HEK293 (cell line): ENCODE measurements at regions of chr16 and their contacts with region 1.

Region 1: DNA sequence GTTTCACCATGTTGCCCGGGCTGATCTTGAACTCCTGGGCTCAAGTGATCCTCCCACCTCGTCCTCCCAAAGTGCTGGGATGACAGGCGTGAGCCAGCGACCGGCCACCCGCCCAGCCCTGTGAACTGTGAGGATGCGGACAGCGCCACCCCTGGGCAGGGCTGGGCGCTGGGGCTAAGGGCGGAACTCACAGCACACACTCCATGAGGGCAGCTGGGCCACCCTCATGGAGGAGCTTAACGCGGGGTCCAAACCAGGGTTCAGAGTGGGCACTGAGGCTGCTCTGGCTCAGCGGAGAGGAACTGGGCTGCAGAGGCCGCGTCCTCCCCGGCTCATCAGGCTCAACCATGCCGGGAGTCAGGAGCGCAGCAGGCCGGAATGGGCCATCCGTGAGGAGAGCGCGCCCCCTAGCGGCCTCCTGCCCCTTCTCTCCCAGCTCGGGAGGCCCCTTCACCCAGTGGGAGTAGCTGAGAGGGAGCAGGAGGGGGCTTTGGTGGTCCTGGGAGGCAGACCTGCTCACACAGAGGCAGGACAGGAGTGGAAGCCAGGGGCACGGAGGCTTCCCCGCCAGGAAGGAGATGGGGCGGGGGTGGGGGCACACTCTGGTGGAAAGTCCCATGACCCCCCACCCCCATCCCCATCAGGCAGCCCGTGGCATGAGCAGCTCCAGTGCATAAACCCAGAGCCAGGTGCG is 13.8 kb downstream of the CORO7 start:
- H3K4me3 ChIP-seq: no peak overlapping the region
- H3K27ac ChIP-seq: no peak overlapping the region
- H3K4me1 ChIP-seq: no peaks in the 10 kb centered on the region
- CTCF ChIP-seq: peak; percentile 98

Region 2: DNA sequence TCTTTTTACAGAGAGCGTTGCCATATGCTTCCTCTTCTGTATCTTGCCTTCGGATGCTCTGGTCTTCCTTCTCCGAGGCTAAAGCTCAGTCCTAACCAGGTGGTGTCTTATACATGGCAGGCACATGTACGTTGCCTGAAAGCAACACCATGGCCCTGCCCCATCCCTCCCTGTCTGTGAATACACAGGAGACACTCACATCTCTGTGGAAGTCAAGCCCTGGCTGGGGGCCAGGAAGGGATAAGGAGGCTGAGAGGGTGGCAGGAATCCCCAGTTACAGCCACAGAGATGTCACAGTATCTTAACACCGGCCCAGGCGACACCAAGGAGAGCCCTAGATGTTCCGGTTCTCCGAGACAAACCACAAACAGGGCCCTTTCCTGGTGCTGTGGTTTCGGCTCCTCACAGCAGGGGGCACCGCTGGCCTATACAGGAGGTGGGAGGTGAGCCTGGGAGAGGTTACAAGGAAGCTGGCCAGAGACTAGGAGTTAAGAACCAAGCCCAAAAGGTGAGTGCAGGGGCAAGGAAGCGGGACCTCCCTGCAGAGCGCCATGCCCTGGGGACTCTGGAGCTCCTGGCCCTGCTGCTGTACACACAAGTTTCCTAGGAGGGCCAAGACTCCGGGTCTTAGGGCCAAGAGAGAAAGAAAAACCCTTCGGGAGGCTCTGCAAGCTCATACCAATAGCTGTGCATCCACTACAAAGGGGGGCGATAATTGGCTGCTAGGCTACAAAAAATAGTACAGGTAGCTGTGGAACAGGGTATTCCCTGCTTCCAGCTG is 202.4 kb before region 1 on chr16:
- CTCF ChIA-PET with region 1: interaction called, 23 read pairs
- POLR2A ChIA-PET with region 1: no interaction called
- H3K4me3 ChIP-seq: no peak overlapping the region
- H3K27ac ChIP-seq: no peak overlapping the region
- H3K4me1 ChIP-seq: no peaks in the 10 kb centered on the region
- CTCF ChIP-seq: peak; percentile 80

Region 3: GRCh38 chr16:4288148-4288921 is 114.3 kb before region 1 on chr16:
- CTCF ChIA-PET with region 1: interaction called, 45 read pairs
- POLR2A ChIA-PET with region 1: no interaction called
- H3K4me3 ChIP-seq: no peak overlapping the region; the same call in 1 of the 2 replicates
- H3K27ac ChIP-seq: no peak overlapping the region
- H3K4me1 ChIP-seq: no peaks in the 10 kb centered on the region
- CTCF ChIP-seq: peak; percentile 92

Region 4: DNA sequence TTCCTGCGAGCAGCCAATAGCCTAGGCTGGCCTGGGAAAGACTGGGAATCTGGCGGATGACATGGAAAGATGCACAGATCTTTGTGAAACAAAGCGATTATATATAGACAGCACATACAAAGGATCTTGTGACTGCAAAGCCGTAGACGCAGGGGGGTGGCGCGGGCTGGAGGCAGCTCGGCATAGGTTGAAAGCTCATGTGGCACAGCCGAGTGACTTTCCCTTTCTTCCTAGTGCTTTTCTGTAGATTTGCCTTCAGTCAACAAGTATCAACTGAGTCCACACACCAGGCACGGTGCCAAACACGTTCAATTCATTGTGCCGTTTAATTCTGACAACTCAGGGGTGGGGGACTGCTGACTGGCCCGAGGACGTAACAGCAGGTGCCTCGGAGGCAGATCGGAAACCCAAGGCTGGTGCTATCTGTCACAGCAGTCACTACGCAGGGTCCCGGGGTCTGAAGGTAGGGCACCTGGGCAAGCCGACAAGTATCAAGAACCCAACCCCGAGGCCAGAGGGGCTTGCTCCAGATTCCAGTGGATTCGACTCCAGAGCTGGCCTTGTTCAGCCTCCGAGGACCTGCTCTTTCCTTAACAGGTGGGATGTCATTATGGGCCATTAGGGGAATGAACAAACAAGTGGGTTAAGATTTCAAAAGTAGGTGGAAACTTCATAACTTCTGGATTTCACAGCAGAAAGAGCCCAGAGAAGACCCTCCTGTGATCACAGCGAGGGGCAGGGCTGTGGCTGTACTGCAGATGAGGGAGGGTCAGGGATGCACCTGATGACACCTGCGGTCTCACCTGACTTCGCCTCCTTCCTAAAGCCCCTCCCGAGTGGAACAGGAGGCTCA is 57.4 kb before region 1 on chr16:
- CTCF ChIA-PET with region 1: interaction called, 39 read pairs
- POLR2A ChIA-PET with region 1: no interaction called
- H3K4me3 ChIP-seq: no peak overlapping the region
- H3K27ac ChIP-seq: no peak overlapping the region
- H3K4me1 ChIP-seq: peaks cover 11% of the 10 kb centered on the region
- CTCF ChIP-seq: no peak

Region 5: GRCh38 chr16:4365014-4365406 is 37.6 kb before region 1 on chr16:
- CTCF ChIA-PET with region 1: interaction called, 118 read pairs
- POLR2A ChIA-PET with region 1: interaction called, 8 read pairs
- H3K4me3 ChIP-seq: no peak overlapping the region
- H3K27ac ChIP-seq: no peak overlapping the region
- H3K4me1 ChIP-seq: no peaks in the 10 kb centered on the region
- CTCF ChIP-seq: no peak

Region 6: DNA sequence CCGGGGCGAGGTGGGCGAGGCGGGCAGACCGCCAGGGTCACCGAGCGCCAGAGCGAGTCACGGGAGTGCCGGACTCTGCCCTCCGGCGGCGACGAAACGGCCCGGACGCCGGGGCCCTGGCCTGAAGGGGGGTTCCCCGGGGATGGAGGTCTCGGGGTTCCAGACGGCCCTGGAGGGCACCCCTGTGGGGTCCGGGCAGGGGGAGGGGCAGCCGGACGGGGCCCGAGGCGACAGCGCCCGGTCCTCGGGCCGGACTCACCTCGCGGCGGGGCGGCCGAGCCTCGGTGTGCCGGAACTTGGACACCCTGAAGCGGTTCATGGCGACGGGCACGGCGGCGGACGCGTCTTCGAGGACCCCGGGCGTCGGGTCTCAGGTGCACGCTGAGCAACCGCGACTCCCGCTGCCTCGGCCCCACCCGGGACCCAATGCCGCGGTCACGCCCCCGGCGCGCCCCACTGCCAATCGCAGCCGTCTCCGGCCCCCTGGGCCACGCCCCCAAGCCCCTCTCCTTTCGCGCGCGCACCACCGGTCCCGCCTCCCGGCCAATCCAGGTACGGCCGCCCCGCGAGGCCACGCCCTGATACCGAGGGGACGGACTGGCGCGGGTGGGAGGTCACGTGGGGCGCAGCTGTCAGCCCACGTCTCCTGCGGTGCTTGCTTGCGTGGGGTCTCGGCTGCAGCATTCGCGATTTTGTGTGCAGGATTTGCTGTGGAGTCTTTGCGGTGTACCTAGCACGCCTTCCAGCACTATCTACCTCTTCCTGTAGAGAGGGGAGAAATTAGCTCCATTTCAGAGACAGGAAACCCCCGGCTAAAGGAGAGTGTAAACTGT is 13.8 kb after region 1 on chr16 and contains the start of gene CORO7:
- CTCF ChIA-PET with region 1: interaction called, 135 read pairs
- POLR2A ChIA-PET with region 1: interaction called, 6 read pairs
- H3K4me3 ChIP-seq: peak within 1 kb of the TSS; percentile 67
- H3K27ac ChIP-seq: peak within 1 kb of the TSS; percentile 72; the same call in 1 of the 2 replicates
- H3K4me1 ChIP-seq: no peaks in the 10 kb centered on the region
- CTCF ChIP-seq: no peak